K562 (cell line): ENCODE measurements at regions of chr12 and their contacts with region 1.

Region 1: GRCh38 chr12:98743347-98743953 is 98.4 kb downstream of the APAF1 start:
- DNase-seq: peak; percentile 34 to 61 (median 48)
- ATAC-seq: peak; percentile 95
- H3K4me3 ChIP-seq: no peak overlapping the region
- H3K27ac ChIP-seq: no peak overlapping the region
- H3K4me1 ChIP-seq: peaks cover 0 to 4% of the 10 kb centered on the region in 2 experiments; a peak in 1 of 5 replicates
- H3K27me3 ChIP-seq: peaks cover 7 to 36% of the 10 kb centered on the region in 2 experiments; a peak in 3 of 5 replicates
- CTCF ChIP-seq: peak; percentile 74 to 83 (median 75)
- EP300 ChIP-seq: no peak
- POLR2A ChIP-seq: no peak
- RAD21 ChIP-seq: peak in 1 of 2 experiments; percentile 63; a peak in 3 of 4 replicates

Region 2: DNA sequence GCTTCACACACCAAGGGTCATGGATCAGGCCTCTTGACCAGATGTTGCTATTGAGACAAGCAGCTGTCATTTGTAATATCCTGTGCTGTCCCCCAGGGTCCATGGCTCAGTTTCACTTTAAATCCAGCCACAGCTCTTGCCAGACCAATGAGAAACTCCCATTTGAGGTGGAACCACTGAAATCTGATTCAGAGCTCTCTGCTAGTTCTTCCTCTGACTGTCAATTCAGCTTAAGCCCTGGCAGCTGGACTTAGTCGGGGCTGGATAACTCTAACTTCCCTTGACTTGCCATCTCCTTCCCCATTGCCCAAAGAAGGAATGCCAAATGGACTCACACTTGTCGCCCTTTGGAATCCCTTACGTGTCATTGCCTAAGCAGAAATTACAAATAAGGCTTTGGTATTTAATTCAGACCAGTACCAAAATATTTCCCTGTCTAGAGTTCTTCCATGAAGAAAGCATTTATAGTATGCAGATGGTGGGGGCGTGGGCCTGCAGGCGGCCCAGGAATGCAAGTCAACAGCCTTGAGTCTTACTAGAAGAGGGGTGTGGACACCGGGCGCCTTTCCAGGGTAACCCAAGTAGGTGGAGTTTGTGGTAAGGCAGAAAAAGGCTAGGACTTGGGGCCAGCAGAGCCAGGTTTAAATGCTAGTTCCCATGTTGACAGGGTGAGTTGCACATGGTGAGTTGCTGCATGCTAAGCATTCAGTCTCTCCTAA is 324.9 kb before region 1 on chr12:
- CTCF ChIA-PET with region 1: no interaction called
- POLR2A ChIA-PET with region 1: no interaction called
- in situ Hi-C with region 1: no loop called
- intact Hi-C with region 1: loop called (anchors 10 kb)
- DNase-seq: peak; percentile 37 to 60 (median 45)
- ATAC-seq: peak; percentile 71
- H3K4me3 ChIP-seq: no peak overlapping the region
- H3K27ac ChIP-seq: no peak overlapping the region
- H3K4me1 ChIP-seq: peaks cover 0 to 5% of the 10 kb centered on the region in 2 experiments; a peak in 4 of 5 replicates
- H3K27me3 ChIP-seq: peaks cover 3 to 41% of the 10 kb centered on the region in 2 experiments; a peak in 4 of 5 replicates
- CTCF ChIP-seq: no peak
- EP300 ChIP-seq: no peak
- POLR2A ChIP-seq: no peak
- RAD21 ChIP-seq: no peak

Region 3: GRCh38 chr12:98559666-98560065 is 183.8 kb before region 1 on chr12:
- CTCF ChIA-PET with region 1: no interaction called
- POLR2A ChIA-PET with region 1: no interaction called
- in situ Hi-C with region 1: loop called (anchors 10 kb)
- intact Hi-C with region 1: no loop called
- DNase-seq: no peak
- ATAC-seq: no peak
- H3K4me3 ChIP-seq: no peak overlapping the region
- H3K27ac ChIP-seq: no peak overlapping the region
- H3K4me1 ChIP-seq: no peaks in the 10 kb centered on the region
- H3K27me3 ChIP-seq: no peaks in the 10 kb centered on the region
- CTCF ChIP-seq: no peak
- EP300 ChIP-seq: no peak
- POLR2A ChIP-seq: no peak
- RAD21 ChIP-seq: no peak

Region 4: DNA sequence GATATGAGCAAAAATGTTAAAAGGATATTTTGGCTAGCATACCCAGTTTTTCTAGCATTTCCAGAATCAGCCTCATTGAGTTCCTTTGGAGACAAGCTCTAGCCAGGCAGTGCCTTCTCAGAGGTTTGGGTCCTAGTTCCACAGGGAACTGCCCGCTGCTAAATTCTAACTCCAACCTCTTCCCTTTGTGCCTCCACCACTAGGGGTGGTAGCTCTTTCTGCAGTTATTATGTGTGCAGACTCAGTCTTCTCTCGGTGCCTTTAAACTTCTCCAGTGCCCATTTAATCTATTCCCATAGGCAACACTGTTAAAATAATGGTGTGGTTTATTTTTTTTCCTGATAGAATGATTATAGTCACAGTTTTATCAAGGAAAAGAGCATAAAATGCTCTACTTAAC is 171.4 kb before region 1 on chr12:
- CTCF ChIA-PET with region 1: no interaction called
- POLR2A ChIA-PET with region 1: no interaction called
- in situ Hi-C with region 1: loop called (anchors 10 kb)
- intact Hi-C with region 1: loop called (anchors 5 kb)
- DNase-seq: peak in 3 of 4 experiments; percentile 40 to 54 (median 49)
- ATAC-seq: peak; percentile 89
- H3K4me3 ChIP-seq: no peak overlapping the region
- H3K27ac ChIP-seq: no peak overlapping the region
- H3K4me1 ChIP-seq: no peaks in the 10 kb centered on the region
- H3K27me3 ChIP-seq: no peaks in the 10 kb centered on the region
- CTCF ChIP-seq: peak; percentile 59 to 65 (median 60)
- EP300 ChIP-seq: no peak
- POLR2A ChIP-seq: no peak
- RAD21 ChIP-seq: peak in 1 of 2 experiments; percentile 37; a peak in 2 of 4 replicates

Region 5: GRCh38 chr12:98635657-98636323 is 107.7 kb before region 1 on chr12:
- CTCF ChIA-PET with region 1: no interaction called
- POLR2A ChIA-PET with region 1: no interaction called
- in situ Hi-C with region 1: no loop called
- intact Hi-C with region 1: no loop called
- DNase-seq: no peak
- ATAC-seq: no peak
- H3K4me3 ChIP-seq: no peak overlapping the region
- H3K27ac ChIP-seq: no peak overlapping the region
- H3K4me1 ChIP-seq: no peaks in the 10 kb centered on the region
- H3K27me3 ChIP-seq: no peaks in the 10 kb centered on the region
- CTCF ChIP-seq: no peak
- EP300 ChIP-seq: no peak
- POLR2A ChIP-seq: no peak
- RAD21 ChIP-seq: no peak

Region 6: DNA sequence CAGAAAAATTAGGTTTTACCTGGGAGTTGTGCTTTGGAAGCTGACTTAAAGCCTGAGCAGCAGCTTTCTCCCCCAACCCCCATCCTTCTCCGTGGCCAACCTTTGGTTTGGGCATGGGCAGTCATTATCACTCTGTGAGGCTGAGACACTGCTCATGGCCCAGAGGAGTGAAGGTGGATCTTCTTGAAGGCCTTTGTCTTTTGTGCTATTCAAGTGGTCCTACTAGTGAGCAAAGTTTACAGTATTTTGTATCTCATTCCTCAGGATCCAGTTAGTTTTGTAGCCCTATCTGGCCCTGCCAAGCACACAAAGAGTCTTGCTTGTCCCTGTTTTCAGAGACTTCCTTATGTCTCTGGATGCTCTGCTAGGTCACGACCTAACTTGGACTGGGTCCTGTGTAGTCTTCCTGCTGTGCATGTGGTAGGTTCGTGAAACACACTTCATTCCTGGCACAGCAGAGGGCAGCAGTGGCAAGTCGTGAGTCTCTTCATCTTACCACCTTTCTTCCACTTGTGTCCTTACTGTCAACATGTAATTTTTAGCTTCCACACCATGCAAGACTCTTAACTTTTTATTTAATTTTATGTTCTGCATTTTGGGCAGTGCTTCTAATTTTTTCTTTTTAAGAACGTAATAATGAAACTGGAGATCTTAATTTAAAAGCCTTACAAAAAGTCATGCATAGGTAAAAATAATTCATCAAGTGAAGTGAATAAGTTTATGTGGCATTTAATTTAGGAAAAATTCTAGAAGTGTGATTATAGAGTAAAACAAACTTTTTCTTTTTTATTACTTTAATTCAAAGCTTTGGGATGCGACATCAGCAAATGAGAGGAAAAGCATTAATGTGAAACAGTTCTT is 44.6 kb before region 1 on chr12:
- CTCF ChIA-PET with region 1: no interaction called
- POLR2A ChIA-PET with region 1: no interaction called
- in situ Hi-C with region 1: no loop called
- intact Hi-C with region 1: loop called (anchors 1 kb)
- DNase-seq: peak; percentile 30 to 70 (median 44)
- ATAC-seq: peak; percentile 89
- H3K4me3 ChIP-seq: no peak overlapping the region
- H3K27ac ChIP-seq: no peak overlapping the region
- H3K4me1 ChIP-seq: peaks cover 4% of the 10 kb centered on the region in 2 experiments; a peak in 2 of 5 replicates
- H3K27me3 ChIP-seq: no peaks in the 10 kb centered on the region
- CTCF ChIP-seq: peak; percentile 67 to 77 (median 69)
- EP300 ChIP-seq: no peak
- POLR2A ChIP-seq: no peak
- RAD21 ChIP-seq: peak; percentile 30 to 76; a peak in 2 of 4 replicates

Region 7: GRCh38 chr12:98845957-98846356 is 102.5 kb after region 1 on chr12:
- CTCF ChIA-PET with region 1: no interaction called
- POLR2A ChIA-PET with region 1: no interaction called
- in situ Hi-C with region 1: no loop called
- intact Hi-C with region 1: no loop called
- DNase-seq: no peak
- ATAC-seq: no peak
- H3K4me3 ChIP-seq: no peak overlapping the region
- H3K27ac ChIP-seq: no peak overlapping the region
- H3K4me1 ChIP-seq: no peaks in the 10 kb centered on the region
- H3K27me3 ChIP-seq: peaks cover 0 to under 1% of the 10 kb centered on the region in 2 experiments; a peak in 1 of 5 replicates
- CTCF ChIP-seq: no peak
- EP300 ChIP-seq: no peak
- POLR2A ChIP-seq: no peak
- RAD21 ChIP-seq: no peak